Activated CD8-positive, alpha-beta T cell treated with anti-CD3 and anti-CD28 coated beads, Interleukin-2, amount 10 ng/mL, durations not matched to agents 7 days and 5 days (primary cell): ENCODE measurements at regions of chr1 and their contacts with region 1.

Region 1: GRCh38 chr1:84923317-84923716 is 30.3 kb upstream of the LPAR3 start:
- DNase-seq: no peak
- ATAC-seq: no peak
- H3K4me3 Mint-ChIP-seq: no peak overlapping the region
- H3K27ac Mint-ChIP-seq: no peak overlapping the region
- H3K4me1 Mint-ChIP-seq: no peaks in the 10 kb centered on the region
- H3K27me3 Mint-ChIP-seq: peaks cover under 1% of the 10 kb centered on the region

Region 2: GRCh38 chr1:84936116-84936810 is 12.9 kb after region 1 on chr1:
- CTCF ChIA-PET with region 1: interaction called, 18 read pairs
- POLR2A ChIA-PET with region 1: no interaction called
- DNase-seq: peak; percentile 49
- ATAC-seq: peak; percentile 55
- H3K4me3 Mint-ChIP-seq: no peak overlapping the region
- H3K27ac Mint-ChIP-seq: no peak overlapping the region
- H3K4me1 Mint-ChIP-seq: no peaks in the 10 kb centered on the region
- H3K27me3 Mint-ChIP-seq: no peaks in the 10 kb centered on the region

Region 3: DNA sequence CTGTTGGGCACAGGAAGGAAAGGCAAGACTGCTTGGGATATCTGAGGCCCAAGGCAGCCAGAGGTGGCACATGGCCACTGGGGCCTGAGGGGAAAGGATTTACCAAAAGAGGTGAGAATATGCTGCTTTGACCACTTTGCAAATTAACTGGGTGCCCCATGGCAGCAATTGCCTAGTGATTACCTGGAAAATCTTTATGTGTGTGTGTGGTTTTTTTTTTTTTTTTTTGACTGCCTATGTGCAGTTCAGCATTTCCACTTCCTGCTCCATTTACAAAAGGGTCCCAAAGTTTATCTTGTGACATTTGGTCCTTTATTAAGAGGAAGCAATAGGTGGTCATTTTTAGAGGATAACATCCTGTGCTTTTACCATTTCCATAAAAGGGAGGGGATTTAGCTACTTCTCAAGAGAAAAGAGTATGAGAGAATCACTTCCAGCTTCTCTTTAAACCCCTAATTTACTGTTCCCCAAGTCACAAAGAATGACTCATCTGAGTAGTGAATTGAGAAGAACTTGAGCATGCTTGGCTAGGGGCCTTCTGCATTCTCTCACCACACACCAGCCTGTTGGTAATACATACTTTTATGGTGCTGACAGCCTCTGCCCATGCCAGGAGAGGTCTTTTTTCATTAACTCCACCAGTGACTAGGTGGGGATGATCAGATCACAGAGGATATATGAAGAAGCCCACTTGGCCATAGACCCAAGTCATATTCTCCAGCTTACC is 225.4 kb after region 1 on chr1:
- CTCF ChIA-PET with region 1: no interaction called
- POLR2A ChIA-PET with region 1: no interaction called
- DNase-seq: peak; percentile 54
- ATAC-seq: peak; percentile 85
- H3K4me3 Mint-ChIP-seq: no peak overlapping the region
- H3K27ac Mint-ChIP-seq: peak overlapping the region; percentile 66
- H3K4me1 Mint-ChIP-seq: peaks cover 37% of the 10 kb centered on the region
- H3K27me3 Mint-ChIP-seq: peaks cover 2% of the 10 kb centered on the region